CD4-positive, alpha-beta T cell (primary cell): ENCODE measurements at regions of chr1 and their contacts with region 1.

Region 1: DNA sequence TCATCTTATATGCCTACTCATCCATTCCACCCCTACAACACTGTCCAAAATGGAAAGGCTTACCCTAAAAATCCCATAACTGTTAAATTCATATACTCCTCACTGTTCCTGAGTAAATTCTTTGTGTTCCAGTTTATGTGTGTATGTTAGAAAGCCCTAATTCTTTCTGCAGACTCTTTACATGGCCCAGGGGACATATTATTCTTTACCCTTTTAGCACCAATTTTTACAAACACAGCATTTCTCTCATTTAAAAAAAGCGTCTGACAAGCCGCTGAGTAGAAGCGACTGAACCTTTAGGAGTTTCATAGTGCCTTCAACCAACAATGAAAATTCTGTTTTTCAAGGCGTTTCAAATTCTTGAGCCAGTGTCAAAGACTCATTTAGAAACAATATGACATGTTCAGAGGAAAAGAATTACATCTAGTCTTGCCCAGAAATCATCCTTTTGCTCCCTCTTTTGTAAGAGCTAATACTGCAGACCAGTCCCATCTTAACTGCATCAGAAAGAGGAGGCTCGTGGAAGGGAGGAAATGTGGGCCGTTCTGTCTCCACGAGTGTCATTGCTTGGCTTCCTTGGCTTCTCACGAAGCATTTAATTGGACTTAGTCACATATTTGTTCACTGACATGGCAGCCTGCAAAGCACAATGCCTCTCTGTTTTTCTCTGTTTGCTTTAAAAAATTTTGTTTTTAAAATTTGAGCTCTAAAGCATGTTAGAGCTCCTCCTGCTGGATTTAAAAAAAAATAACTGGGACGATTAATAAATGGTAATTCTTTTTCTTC is 21.3 kb upstream of the C1orf105 start:
- DNase-seq: peak in 7 of 14 experiments; percentile 2 to 65 (median 60)
- ATAC-seq: peak; percentile 54
- H3K4me3 ChIP-seq: peak overlapping the region; percentile 10
- H3K4me3 Mint-ChIP-seq: peak overlapping the region; percentile 67
- H3K27ac ChIP-seq: no peak overlapping the region
- H3K27ac Mint-ChIP-seq: peak overlapping the region; percentile 81
- H3K4me1 ChIP-seq: peaks cover 18% of the 10 kb centered on the region
- H3K4me1 Mint-ChIP-seq: peaks cover 74% of the 10 kb centered on the region
- H3K27me3 ChIP-seq: no peaks in the 10 kb centered on the region
- H3K27me3 Mint-ChIP-seq: no peaks in the 10 kb centered on the region
- CTCF ChIP-seq: peak; percentile 87

Region 2: GRCh38 chr1:171781176-171781875 is 617.8 kb before region 1 on chr1 and contains the start of gene METTL13:
- CTCF ChIA-PET with region 1: no interaction called
- POLR2A ChIA-PET with region 1: no interaction called
- intact Hi-C with region 1: loop called in 1 of 2 experiments (anchors 10 kb)
- DNase-seq: peak; percentile 95 to 100 (median 98)
- ATAC-seq: peak; percentile 91
- H3K4me3 ChIP-seq: peak within 1 kb of the TSS; percentile 78
- H3K4me3 Mint-ChIP-seq: peak within 1 kb of the TSS; percentile 99
- H3K27ac ChIP-seq: peak within 1 kb of the TSS; percentile 63 to 75
- H3K27ac Mint-ChIP-seq: peak within 1 kb of the TSS; percentile 90
- H3K4me1 ChIP-seq: peaks cover 46% of the 10 kb centered on the region
- H3K4me1 Mint-ChIP-seq: peaks cover 47% of the 10 kb centered on the region
- H3K27me3 ChIP-seq: no peaks in the 10 kb centered on the region
- H3K27me3 Mint-ChIP-seq: no peaks in the 10 kb centered on the region
- CTCF ChIP-seq: no peak
- total RNA-seq, gene METTL13: 6.5 to 7.9 TPM

Region 3: GRCh38 chr1:172089768-172090510 is 309.2 kb before region 1 on chr1:
- CTCF ChIA-PET with region 1: interaction called, 3 read pairs
- POLR2A ChIA-PET with region 1: interaction called, 9 read pairs
- intact Hi-C with region 1: loop called (anchors 1 kb)
- DNase-seq: peak; percentile 42 to 78 (median 50)
- ATAC-seq: peak; percentile 96
- H3K4me3 ChIP-seq: no peak overlapping the region
- H3K4me3 Mint-ChIP-seq: no peak overlapping the region
- H3K27ac ChIP-seq: no peak overlapping the region
- H3K27ac Mint-ChIP-seq: no peak overlapping the region
- H3K4me1 ChIP-seq: no peaks in the 10 kb centered on the region
- H3K4me1 Mint-ChIP-seq: no peaks in the 10 kb centered on the region
- H3K27me3 ChIP-seq: no peaks in the 10 kb centered on the region
- H3K27me3 Mint-ChIP-seq: no peaks in the 10 kb centered on the region
- CTCF ChIP-seq: peak; percentile 76

Region 4: GRCh38 chr1:172180501-172181285 is 218.5 kb before region 1 on chr1:
- CTCF ChIA-PET with region 1: interaction called, 3 read pairs
- POLR2A ChIA-PET with region 1: interaction called, 16 read pairs
- intact Hi-C with region 1: loop called (anchors 1 to 5 kb)
- DNase-seq: peak in 12 of 14 experiments; percentile 11 to 79 (median 30)
- ATAC-seq: peak; percentile 65
- H3K4me3 ChIP-seq: peak overlapping the region; percentile 41
- H3K4me3 Mint-ChIP-seq: peak overlapping the region; percentile 83
- H3K27ac ChIP-seq: peak overlapping the region; percentile 71 to 89
- H3K27ac Mint-ChIP-seq: peak overlapping the region; percentile 97
- H3K4me1 ChIP-seq: peaks cover 11% of the 10 kb centered on the region
- H3K4me1 Mint-ChIP-seq: peaks cover 49% of the 10 kb centered on the region
- H3K27me3 ChIP-seq: no peaks in the 10 kb centered on the region
- H3K27me3 Mint-ChIP-seq: no peaks in the 10 kb centered on the region
- CTCF ChIP-seq: no peak

Region 5: DNA sequence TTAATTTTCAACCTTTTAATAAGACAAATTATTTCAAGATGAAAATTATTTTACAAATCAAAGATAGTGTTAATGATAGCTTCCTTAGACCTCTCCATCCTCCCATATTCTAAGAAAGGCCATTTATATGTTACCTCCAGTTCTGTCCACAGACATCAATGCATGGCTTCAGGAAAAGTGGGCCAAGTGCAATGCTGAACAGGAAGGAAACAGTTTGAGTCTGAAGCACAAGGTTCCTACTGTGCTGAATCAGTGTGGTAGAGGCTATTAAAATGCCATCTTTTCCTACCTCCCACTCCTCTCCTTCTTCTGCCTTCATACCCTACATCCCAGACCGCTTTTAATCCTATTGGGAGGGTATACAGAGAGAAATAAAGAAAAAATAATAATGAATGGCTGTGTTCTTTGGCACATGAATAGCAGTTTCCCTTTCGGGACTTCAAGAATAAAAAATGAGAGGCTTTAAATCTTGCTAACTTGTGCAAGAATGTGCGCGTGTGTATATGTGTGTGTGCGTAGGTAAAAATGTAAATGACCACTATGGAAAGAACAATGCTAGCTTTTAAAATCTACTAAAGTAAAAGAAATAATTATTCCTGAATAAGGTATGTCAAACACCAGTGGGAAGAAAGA is 41.3 kb before region 1 on chr1:
- CTCF ChIA-PET with region 1: interaction called, 12 read pairs
- POLR2A ChIA-PET with region 1: interaction called, 43 read pairs
- intact Hi-C with region 1: loop called (anchors 2 kb)
- DNase-seq: peak in 1 of 14 experiments; percentile 33
- ATAC-seq: peak; percentile 19
- H3K4me3 ChIP-seq: peak overlapping the region; percentile 4
- H3K4me3 Mint-ChIP-seq: peak overlapping the region; percentile 70
- H3K27ac ChIP-seq: peak overlapping the region; percentile 64 to 74
- H3K27ac Mint-ChIP-seq: peak overlapping the region; percentile 91
- H3K4me1 ChIP-seq: peaks cover 30% of the 10 kb centered on the region
- H3K4me1 Mint-ChIP-seq: peaks cover 28% of the 10 kb centered on the region
- H3K27me3 ChIP-seq: no peaks in the 10 kb centered on the region
- H3K27me3 Mint-ChIP-seq: no peaks in the 10 kb centered on the region
- CTCF ChIP-seq: no peak

Region 6: GRCh38 chr1:172429331-172430127 is 30.4 kb after region 1 on chr1:
- CTCF ChIA-PET with region 1: no interaction called
- POLR2A ChIA-PET with region 1: interaction called, 16 read pairs
- intact Hi-C with region 1: no loop called
- DNase-seq: peak in 12 of 14 experiments; percentile 8 to 81 (median 34)
- ATAC-seq: peak; percentile 75
- H3K4me3 ChIP-seq: no peak overlapping the region
- H3K4me3 Mint-ChIP-seq: peak overlapping the region; percentile 64
- H3K27ac ChIP-seq: no peak overlapping the region
- H3K27ac Mint-ChIP-seq: peak overlapping the region; percentile 75
- H3K4me1 ChIP-seq: peaks cover 39% of the 10 kb centered on the region
- H3K4me1 Mint-ChIP-seq: peaks cover 39% of the 10 kb centered on the region
- H3K27me3 ChIP-seq: no peaks in the 10 kb centered on the region
- H3K27me3 Mint-ChIP-seq: no peaks in the 10 kb centered on the region
- CTCF ChIP-seq: peak; percentile 80